PC-9 (cell line): ENCODE measurements at regions of chr3 and their contacts with region 1.

Region 1: GRCh38 chr3:51498876-51499738 is 708 bp downstream of the DCAF1 start:
- DNase-seq: peak; percentile 83 to 95
- H3K4me3 ChIP-seq: peak overlapping the region; percentile 61
- H3K27ac ChIP-seq: peak overlapping the region; percentile 78
- H3K4me1 ChIP-seq: no peaks in the 10 kb centered on the region; the same call in 1 of the 2 replicates
- H3K27me3 ChIP-seq: no peaks in the 10 kb centered on the region
- CTCF ChIP-seq: no peak

Region 2: DNA sequence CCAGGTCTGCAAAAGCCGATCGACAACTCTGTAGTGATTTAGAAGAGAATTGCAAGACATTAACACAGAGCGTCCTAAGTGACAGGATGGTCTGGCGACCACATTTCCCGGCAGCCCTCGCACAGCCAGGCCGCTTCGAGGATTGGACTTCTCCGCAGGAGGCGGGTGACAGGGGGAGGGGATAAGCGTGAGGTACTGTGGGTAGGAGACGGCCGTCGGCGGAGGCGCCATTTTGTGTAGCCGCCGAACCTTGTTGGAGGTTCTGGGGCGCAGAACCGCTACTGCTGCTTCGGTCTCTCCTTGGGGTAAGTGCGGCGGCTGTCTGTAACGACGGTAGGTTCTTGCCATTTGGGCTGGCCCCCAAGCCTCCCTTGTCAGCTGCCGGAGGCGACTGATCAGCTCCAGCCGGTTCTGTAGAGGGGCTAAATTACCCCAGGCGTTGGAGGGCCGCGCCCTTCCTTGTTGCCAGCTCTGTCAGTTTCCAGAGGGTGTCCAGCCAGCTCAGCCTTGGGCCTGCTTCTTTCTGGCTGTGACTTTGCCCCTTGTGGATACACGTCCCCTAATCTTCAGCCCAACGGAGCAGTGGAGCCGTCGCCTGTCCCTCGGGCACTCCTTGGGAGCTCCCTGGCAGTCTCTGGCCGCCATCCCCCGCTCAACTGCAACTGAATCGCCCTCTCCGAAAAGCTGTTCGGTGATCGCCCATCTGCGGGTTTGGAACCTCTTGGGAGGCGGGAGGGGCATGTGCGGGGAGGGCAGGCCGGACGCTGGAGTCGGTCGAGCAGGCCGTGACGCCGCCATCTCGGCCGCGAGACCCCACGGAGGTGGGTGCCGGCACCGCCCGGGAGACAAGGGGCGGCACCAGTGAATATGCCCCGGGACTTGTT is 1410.1 kb before region 1 on chr3 and contains the start of gene RBM5:
- CTCF ChIA-PET with region 1: no interaction called
- POLR2A ChIA-PET with region 1: interaction called, 14 read pairs
- intact Hi-C with region 1: no loop called
- DNase-seq: peak; percentile 80 to 86
- H3K4me3 ChIP-seq: peak within 1 kb of the TSS; percentile 93
- H3K27ac ChIP-seq: peak within 1 kb of the TSS; percentile 53
- H3K4me1 ChIP-seq: peaks cover 7% of the 10 kb centered on the region
- H3K27me3 ChIP-seq: no peaks in the 10 kb centered on the region
- CTCF ChIP-seq: no peak
- total RNA-seq, gene RBM5: 87.7 and 90.2 TPM in 2 replicates

Region 3: DNA sequence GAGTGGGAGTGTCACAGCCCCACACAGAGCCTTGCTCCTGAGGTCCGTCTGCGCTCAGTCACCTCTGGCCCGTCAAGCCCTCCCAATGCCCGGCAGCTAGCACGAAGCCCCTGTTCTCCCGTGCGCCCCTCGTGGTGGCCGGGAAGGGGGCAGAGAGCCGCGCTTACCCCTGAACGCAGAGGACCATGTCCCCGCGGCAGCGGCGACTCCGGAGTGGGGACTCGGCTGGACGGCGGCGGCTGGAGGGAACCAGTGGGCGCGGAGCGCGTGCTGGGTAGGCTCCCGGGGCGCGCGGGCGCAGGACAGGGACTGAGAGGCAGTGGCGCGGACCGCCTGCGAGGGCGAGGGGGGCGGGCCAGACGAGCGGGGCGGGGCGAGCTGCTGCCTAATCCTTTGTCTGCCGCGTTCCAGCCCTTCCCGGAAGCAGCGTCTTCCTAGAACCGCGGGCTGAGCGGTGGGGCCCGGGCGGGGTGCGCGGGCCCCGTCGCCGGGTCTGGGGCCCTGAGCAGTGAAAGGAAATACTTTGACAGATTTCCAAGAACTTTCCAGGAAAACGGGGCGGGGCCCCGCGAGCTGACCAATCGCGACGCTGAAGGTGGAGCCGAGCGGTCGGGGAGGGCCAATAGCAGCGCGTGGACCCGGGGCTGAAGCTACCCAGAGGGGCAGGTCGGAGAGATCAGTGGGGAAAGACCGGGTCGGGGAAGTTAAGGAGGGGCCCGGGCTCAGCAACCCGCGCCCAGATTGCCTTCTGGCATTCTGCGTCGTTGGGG is 887.5 kb before region 1 on chr3 and contains the start of gene CISH:
- CTCF ChIA-PET with region 1: interaction called, 7 read pairs
- POLR2A ChIA-PET with region 1: no interaction called
- intact Hi-C with region 1: loop called (anchors 5 kb)
- DNase-seq: peak; percentile 80 to 91
- H3K4me3 ChIP-seq: peak within 1 kb of the TSS; percentile 65
- H3K27ac ChIP-seq: no peak within 1 kb of the TSS
- H3K4me1 ChIP-seq: peaks cover 18% of the 10 kb centered on the region
- H3K27me3 ChIP-seq: no peaks in the 10 kb centered on the region
- CTCF ChIP-seq: no peak; the same call in 1 of the 2 replicates
- total RNA-seq, gene CISH: 2.7 and 3.2 TPM in 2 replicates

Region 4: GRCh38 chr3:51605938-51606337 is 106.8 kb after region 1 on chr3:
- CTCF ChIA-PET with region 1: no interaction called
- POLR2A ChIA-PET with region 1: no interaction called
- intact Hi-C with region 1: no loop called
- DNase-seq: no peak
- H3K4me3 ChIP-seq: no peak overlapping the region
- H3K27ac ChIP-seq: no peak overlapping the region
- H3K4me1 ChIP-seq: no peaks in the 10 kb centered on the region
- H3K27me3 ChIP-seq: no peaks in the 10 kb centered on the region
- CTCF ChIP-seq: no peak

Region 5: GRCh38 chr3:51637941-51638471 is 138.9 kb after region 1 on chr3:
- CTCF ChIA-PET with region 1: no interaction called
- POLR2A ChIA-PET with region 1: interaction called, 3 read pairs
- intact Hi-C with region 1: loop called (anchors 1 kb)
- DNase-seq: peak; percentile 33 to 59
- H3K4me3 ChIP-seq: no peak overlapping the region
- H3K27ac ChIP-seq: no peak overlapping the region
- H3K4me1 ChIP-seq: peaks cover 16% of the 10 kb centered on the region
- H3K27me3 ChIP-seq: no peaks in the 10 kb centered on the region
- CTCF ChIP-seq: peak; percentile 79

Region 6: DNA sequence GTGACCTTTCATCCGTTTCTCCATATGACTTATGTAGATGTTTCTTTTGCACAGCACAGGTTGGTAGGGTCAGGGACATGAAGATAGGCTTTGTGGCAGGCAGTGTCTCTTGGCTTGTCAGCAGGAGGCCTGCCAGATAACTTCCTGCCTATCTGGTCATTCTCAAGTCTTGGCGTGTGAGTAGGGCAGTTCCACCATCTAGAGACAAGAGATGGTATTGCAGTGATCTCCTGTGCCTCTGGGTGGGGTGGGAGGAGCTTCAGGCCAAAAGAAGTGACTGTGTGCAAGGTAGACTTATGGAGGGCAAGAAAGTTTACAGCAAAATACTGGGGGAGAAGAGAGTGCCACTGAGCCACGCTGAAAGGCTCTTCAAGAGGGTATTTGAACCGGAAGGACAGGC is 183.0 kb after region 1 on chr3:
- CTCF ChIA-PET with region 1: interaction called, 34 read pairs
- POLR2A ChIA-PET with region 1: interaction called, 5 read pairs
- intact Hi-C with region 1: loop called (anchors 1 kb)
- DNase-seq: peak; percentile 67 to 69
- H3K4me3 ChIP-seq: no peak overlapping the region
- H3K27ac ChIP-seq: no peak overlapping the region
- H3K4me1 ChIP-seq: no peaks in the 10 kb centered on the region
- H3K27me3 ChIP-seq: no peaks in the 10 kb centered on the region
- CTCF ChIP-seq: peak; percentile 85

Region 7: GRCh38 chr3:52423173-52423572 is 924.1 kb after region 1 on chr3:
- CTCF ChIA-PET with region 1: no interaction called
- POLR2A ChIA-PET with region 1: interaction called, 20 read pairs
- intact Hi-C with region 1: no loop called
- DNase-seq: no peak
- H3K4me3 ChIP-seq: no peak overlapping the region
- H3K27ac ChIP-seq: no peak overlapping the region
- H3K4me1 ChIP-seq: no peaks in the 10 kb centered on the region
- H3K27me3 ChIP-seq: no peaks in the 10 kb centered on the region
- CTCF ChIP-seq: no peak